Activated CD4-positive, alpha-beta T cell treated with anti-CD3 and anti-CD28 coated beads, Interleukin-2, amount 10 ng/mL, durations not matched to agents 24 days and 14 days (primary cell): ENCODE measurements at regions of chr13 and their contacts with region 1.

Region 1: GRCh38 chr13:27977476-27978300 is 8.6 kb upstream of the CDX2 start:
- DNase-seq: no peak
- H3K4me3 Mint-ChIP-seq: peak overlapping the region; percentile 48
- H3K27ac Mint-ChIP-seq: peak overlapping the region; percentile 77
- H3K4me1 Mint-ChIP-seq: peaks cover 8% of the 10 kb centered on the region
- H3K27me3 Mint-ChIP-seq: peaks cover 85% of the 10 kb centered on the region

Region 2: GRCh38 chr13:26985285-26985878 is 992.3 kb before region 1 on chr13:
- intact Hi-C with region 1: loop called (anchors 10 kb)
- DNase-seq: peak; percentile 92
- H3K4me3 Mint-ChIP-seq: no peak overlapping the region
- H3K27ac Mint-ChIP-seq: no peak overlapping the region
- H3K4me1 Mint-ChIP-seq: peaks cover 9% of the 10 kb centered on the region
- H3K27me3 Mint-ChIP-seq: peaks cover 4% of the 10 kb centered on the region

Region 3: DNA sequence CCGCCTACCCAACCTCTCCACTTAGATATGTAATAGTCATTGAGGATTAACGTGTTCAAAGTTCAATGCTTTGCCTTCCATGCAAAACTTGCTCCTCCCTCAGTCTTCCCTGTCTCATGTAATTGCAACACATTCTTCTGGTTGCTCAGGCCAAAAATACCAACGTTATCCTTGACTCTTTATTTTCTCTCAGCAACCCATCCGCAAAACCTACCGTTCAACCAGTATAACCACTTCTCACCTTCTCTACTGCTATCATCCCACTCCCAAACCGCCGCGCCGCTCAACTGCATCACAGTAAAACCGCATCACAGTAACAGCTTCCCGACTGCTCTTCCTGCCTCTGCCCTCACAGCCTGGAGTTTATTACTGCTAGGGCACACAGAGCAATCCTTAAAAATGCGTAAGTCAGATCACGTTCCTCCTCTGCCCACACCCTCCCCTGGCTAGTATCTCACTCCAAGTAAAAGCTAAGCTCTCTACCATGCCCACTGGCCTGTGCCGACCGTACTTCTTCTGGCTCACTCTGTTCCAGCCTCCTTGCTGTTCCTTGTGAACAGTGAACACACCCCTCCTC is 535.5 kb before region 1 on chr13:
- intact Hi-C with region 1: no loop called
- DNase-seq: peak; percentile 66
- H3K4me3 Mint-ChIP-seq: peak overlapping the region; percentile 57
- H3K27ac Mint-ChIP-seq: peak overlapping the region; percentile 18
- H3K4me1 Mint-ChIP-seq: peaks cover 51% of the 10 kb centered on the region
- H3K27me3 Mint-ChIP-seq: no peaks in the 10 kb centered on the region

Region 4: DNA sequence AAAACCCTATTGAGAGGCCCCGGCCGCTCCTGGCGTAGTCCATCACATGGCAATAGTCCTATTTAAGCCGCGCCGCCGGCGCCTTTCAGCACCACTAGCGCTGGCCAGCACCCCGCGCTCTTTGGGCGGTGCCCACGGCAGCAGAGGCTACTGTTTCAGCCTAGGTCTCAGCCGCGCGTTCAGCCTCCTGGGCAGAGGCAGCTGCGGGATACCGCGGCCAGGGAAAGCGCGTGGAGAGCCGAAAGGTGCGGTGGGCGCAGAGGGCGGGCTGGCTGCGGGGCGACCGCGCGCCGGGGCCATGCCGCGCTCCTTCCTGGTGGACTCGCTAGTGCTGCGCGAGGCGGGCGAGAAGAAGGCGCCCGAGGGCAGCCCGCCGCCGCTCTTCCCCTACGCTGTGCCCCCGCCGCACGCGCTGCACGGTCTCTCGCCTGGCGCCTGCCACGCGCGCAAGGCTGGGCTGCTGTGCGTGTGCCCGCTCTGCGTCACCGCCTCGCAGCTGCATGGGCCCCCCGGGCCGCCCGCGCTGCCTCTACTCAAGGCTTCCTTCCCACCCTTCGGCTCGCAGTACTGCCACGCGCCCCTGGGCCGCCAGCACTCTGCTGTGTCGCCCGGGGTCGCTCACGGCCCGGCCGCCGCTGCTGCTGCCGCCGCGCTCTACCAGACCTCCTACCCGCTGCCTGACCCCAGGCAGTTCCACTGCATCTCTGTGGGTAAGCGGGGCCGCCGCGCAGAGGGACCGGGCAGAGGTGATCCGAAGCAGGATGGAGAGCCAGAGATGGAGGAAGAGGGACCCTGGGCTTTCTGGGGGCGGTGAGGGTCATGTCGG is 185.1 kb before region 1 on chr13 and contains the start of gene GSX1:
- intact Hi-C with region 1: loop called (anchors 2 kb)
- DNase-seq: peak; percentile 83
- H3K4me3 Mint-ChIP-seq: peak within 1 kb of the TSS; percentile 76
- H3K27ac Mint-ChIP-seq: peak within 1 kb of the TSS; percentile 46
- H3K4me1 Mint-ChIP-seq: peaks cover 21% of the 10 kb centered on the region
- H3K27me3 Mint-ChIP-seq: peaks cover 76% of the 10 kb centered on the region
- total RNA-seq, gene GSX1: not detected in 2 replicates

Region 5: DNA sequence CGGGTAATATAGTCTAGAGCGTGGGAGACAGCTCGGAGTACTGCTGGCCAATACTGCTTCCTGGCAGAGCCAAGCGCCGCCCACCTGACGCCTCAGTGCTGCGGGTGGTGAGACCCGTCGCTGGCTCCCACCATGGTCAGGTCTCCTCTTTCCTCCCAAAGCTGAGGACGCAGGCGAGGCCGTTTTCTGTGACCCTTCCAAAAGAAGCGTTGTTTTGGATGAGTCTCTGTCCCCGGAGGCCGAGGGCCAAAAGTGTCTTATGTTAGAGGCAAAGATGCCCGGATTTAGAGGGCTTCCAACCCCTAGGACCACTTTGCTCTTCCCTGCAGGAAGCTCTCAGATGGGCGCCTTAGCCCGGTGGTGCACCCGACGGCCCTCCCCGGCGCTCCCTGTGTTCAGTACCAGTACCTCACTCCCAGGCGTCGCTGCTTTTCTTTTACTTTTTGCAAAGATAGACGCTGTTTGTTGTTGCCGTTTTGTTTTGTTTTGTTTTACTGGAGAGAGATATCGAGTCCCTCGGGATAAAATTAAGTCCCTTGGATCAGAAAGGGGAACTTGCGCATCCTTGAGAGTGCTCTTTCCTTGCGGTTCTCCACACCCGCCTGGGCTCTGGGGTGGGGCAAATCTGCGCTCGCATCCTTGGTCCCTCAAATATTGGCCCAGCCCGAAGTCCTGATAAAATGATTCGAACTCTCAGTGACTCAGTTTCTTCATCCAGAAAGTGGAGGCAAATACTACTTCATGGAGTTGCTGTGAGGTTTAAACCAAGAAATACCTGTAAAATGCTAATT is 50.8 kb before region 1 on chr13:
- intact Hi-C with region 1: loop called (anchors 2 kb)
- DNase-seq: no peak
- H3K4me3 Mint-ChIP-seq: no peak overlapping the region
- H3K27ac Mint-ChIP-seq: peak overlapping the region; percentile 3
- H3K4me1 Mint-ChIP-seq: peaks cover 7% of the 10 kb centered on the region
- H3K27me3 Mint-ChIP-seq: peaks cover 91% of the 10 kb centered on the region